Common myeloid progenitor, CD34-positive (primary cell): ENCODE measurements at regions of chr7 and their contacts with region 1.

Region 1: DNA sequence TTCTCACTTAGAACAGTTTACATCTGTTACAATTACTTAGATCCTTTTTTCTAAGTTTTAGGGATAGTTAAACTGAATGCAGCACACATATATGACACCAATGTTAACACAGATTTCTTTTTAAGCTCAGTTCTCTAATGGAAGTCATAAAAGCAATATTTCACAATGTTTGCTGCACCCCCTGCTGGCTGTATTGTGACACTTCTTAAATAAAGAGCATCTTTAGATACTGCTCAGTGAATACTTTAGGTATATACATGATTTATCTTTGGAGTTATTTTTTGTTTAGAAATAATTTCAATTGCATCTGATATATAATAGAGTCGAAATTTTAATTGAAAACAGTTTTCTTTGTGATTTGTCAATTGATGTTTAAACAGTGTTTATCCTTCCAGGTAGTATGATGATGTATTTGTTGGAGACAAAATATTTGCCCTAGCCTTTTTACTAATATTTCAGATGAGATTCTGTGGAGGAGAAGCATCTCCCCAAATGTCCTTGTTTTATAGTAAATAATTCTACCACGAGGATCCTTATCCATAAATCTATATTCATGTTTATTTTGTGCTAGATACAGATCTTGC is 174.4 kb downstream of the ST7 start:
- DNase-seq: peak; percentile 58 to 81 (median 76)
- H3K4me3 ChIP-seq: no peak overlapping the region
- H3K27ac ChIP-seq: no peak overlapping the region
- H3K4me1 ChIP-seq: peaks cover 0 to 15% (median 10%) of the 10 kb centered on the region in 4 experiments
- H3K27me3 ChIP-seq: no peaks in the 10 kb centered on the region

Region 2: DNA sequence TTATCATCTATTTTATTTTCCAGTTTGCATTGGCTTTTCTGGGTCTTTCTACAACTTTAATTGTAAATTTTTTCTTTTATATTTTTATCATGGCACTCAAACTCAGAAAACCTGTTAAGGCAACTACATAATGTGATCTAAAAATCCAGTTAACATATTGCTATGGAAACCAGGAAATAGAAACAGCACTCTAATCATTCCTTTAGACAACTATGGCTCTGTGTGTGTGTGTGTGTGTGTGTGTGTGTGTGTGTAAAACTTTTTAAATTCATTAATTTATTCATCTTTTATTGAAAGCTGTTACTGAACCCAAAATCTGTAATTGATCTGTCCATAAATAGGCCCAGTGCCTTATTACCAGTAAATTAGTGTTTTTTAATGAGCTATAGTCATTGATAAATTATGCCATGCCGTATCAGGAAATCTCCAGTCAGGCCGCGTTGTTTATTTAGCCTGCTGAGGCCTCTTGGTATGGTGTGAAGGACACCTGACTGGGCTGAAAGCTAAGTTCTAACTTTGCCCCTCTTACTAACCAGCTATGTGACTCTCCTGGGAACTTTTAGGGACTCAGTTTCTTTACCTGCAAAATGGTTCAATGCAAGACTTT is 457.2 kb before region 1 on chr7:
- CTCF ChIA-PET with region 1: no interaction called
- POLR2A ChIA-PET with region 1: no interaction called
- DNase-seq: peak in 2 of 3 donors; percentile 38 to 60
- H3K4me3 ChIP-seq: no peak overlapping the region
- H3K27ac ChIP-seq: no peak overlapping the region
- H3K4me1 ChIP-seq: peaks cover 3 to 16% (median 16%) of the 10 kb centered on the region in 4 experiments
- H3K27me3 ChIP-seq: peaks cover 2 to 22% (median 13%) of the 10 kb centered on the region in 5 experiments

Region 3: DNA sequence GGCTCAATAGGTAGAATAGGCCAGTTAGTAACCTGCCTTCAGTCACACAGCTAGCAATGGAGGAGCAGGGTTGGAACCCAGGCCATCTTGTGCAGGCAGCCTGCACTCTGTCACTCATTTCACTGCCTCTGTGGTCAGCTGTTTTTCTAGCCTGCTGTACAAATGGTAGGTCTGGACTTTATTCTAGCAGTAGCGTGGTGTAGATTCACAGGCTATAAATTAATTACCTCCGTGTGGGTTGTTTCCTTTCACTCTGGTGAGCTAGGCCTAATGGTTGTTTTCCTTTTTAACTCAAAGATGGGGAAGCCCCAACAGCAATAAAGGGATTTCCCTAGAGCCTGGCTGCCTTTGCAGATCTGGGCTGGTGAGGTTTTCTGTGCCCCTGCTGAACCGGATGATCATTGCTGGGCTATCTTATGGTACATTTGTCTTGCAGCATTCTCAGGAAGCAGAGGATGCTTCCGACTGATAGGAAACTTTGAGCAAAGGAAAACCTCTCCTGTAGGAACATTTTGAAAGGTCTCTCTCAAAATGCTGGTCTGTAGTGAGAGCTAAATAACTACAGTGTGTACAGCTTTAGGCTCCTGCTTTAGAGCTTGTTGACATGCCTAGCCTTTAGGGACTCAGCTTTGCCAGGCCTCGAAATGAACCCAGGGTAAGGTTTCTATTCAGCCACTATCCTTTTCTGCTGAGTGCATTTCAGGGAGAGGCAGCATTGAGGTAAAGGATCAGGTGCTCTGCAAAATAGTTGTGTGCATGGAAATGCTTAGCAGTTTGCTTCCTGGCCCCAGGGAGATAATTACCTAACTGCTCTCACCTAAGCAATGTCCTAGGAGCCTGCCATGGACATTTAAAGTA is 17.0 kb before region 1 on chr7:
- CTCF ChIA-PET with region 1: interaction called, 10 read pairs
- POLR2A ChIA-PET with region 1: no interaction called
- DNase-seq: peak; percentile 59 to 92 (median 89)
- H3K4me3 ChIP-seq: peak overlapping the region in 2 of 7 experiments; percentile 41 to 58
- H3K27ac ChIP-seq: peak overlapping the region; percentile 10 to 69
- H3K4me1 ChIP-seq: peaks cover 10 to 21% (median 17%) of the 10 kb centered on the region in 4 experiments
- H3K27me3 ChIP-seq: no peaks in the 10 kb centered on the region